CD14-positive monocyte (primary cell): ENCODE measurements at regions of chr3 and their contacts with region 1.

Region 1: GRCh38 chr3:12107071-12107713 is 51.5 kb downstream of the TIMP4 start:
- DNase-seq: no peak
- H3K4me3 ChIP-seq: no peak overlapping the region
- H3K4me3 Mint-ChIP-seq: no peak overlapping the region
- H3K27ac ChIP-seq: no peak overlapping the region
- H3K27ac Mint-ChIP-seq: no peak overlapping the region
- H3K4me1 ChIP-seq: no peaks in the 10 kb centered on the region
- H3K4me1 Mint-ChIP-seq: no peaks in the 10 kb centered on the region
- H3K27me3 ChIP-seq: no peaks in the 10 kb centered on the region
- H3K27me3 Mint-ChIP-seq: peaks cover 0 to 6% (median 0%) of the 10 kb centered on the region in 3 donors
- CTCF ChIP-seq: no peak

Region 2: DNA sequence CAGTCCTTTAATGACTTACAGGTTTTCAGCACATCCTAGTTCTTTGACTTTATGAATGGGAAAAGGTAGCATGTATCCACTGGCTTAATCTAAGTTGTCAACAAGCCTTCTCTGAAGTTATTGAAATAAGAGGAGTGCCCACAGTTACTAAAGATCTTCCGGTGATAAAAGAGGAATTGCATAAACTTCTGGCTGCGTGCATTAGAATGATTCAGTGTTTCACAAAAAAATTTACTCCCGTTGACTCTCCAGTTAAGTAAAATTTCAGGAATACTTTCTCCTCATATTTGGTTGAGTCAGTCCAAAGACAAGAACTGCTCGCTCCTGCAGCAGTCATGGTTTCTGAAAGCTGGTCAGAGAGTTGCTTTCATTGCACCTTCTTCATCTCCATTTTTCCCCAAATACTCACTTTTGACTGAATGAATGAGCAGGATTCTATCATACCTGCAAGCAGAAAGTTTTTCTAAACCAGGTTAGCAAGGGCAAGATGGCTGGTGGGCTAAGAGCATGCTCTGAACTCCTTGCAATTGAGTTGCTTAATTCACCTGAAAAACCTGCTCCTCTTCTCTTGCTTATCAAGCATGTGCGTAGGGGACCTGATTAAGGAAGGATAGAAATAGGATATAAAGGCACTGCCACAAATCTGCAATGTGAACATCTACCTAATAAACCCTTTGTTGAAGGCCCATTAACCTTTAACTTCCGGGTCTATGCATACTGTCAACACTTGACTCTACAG is 115.7 kb after region 1 on chr3:
- intact Hi-C with region 1: no loop called
- DNase-seq: peak; percentile 8 to 75 (median 59)
- H3K4me3 ChIP-seq: peak overlapping the region in 1 of 3 experiments; percentile 36
- H3K4me3 Mint-ChIP-seq: peak overlapping the region in 1 of 2 donors; percentile 50
- H3K27ac ChIP-seq: peak overlapping the region in 1 of 2 donors; percentile 22
- H3K27ac Mint-ChIP-seq: peak overlapping the region in 2 of 7 donors; percentile 48 to 60
- H3K4me1 ChIP-seq: peaks cover 21 to 24% of the 10 kb centered on the region in 2 donors
- H3K4me1 Mint-ChIP-seq: peaks cover 34% of the 10 kb centered on the region
- H3K27me3 ChIP-seq: no peaks in the 10 kb centered on the region
- H3K27me3 Mint-ChIP-seq: peaks cover 0 to 3% (median 0%) of the 10 kb centered on the region in 3 donors
- CTCF ChIP-seq: no peak

Region 3: GRCh38 chr3:12495749-12496452 is 388.7 kb after region 1 on chr3:
- intact Hi-C with region 1: no loop called
- DNase-seq: no peak
- H3K4me3 ChIP-seq: no peak overlapping the region
- H3K4me3 Mint-ChIP-seq: no peak overlapping the region
- H3K27ac ChIP-seq: no peak overlapping the region
- H3K27ac Mint-ChIP-seq: no peak overlapping the region
- H3K4me1 ChIP-seq: no peaks in the 10 kb centered on the region
- H3K4me1 Mint-ChIP-seq: no peaks in the 10 kb centered on the region
- H3K27me3 ChIP-seq: no peaks in the 10 kb centered on the region
- H3K27me3 Mint-ChIP-seq: peaks cover 0 to 2% (median 0%) of the 10 kb centered on the region in 3 donors
- CTCF ChIP-seq: no peak

Region 4: DNA sequence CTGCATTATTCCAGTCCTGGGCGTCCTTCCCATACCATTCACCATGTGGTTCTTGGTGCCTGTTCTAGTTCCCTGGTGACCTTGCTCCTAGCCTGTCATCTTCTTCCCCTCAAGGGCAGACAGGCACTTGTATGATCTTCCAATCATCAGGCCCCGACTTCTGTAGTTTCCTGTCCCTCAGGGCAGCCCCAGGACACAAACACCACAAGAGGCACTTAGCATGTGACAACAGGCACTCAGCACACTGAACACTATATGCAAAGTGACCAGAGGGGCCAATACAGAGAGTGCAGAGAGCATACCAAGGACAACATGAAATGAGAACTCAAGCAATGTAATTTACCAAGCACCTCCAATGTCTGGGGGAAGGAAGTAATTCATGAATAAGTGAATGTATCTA is 634.0 kb after region 1 on chr3:
- intact Hi-C with region 1: loop called in 1 of 2 experiments (anchors 10 kb)
- DNase-seq: no peak
- H3K4me3 ChIP-seq: no peak overlapping the region
- H3K4me3 Mint-ChIP-seq: no peak overlapping the region
- H3K27ac ChIP-seq: no peak overlapping the region
- H3K27ac Mint-ChIP-seq: no peak overlapping the region
- H3K4me1 ChIP-seq: no peaks in the 10 kb centered on the region
- H3K4me1 Mint-ChIP-seq: no peaks in the 10 kb centered on the region
- H3K27me3 ChIP-seq: no peaks in the 10 kb centered on the region
- H3K27me3 Mint-ChIP-seq: peaks cover 3 to 4% (median 3%) of the 10 kb centered on the region in 3 donors
- CTCF ChIP-seq: no peak